K562 (cell line): ENCODE measurements at regions of chr12 and their contacts with region 1.

Region 1: GRCh38 chr12:113196996-113197395 is 11.5 kb downstream of the RITA1 start:
- DNase-seq: peak; percentile 73 to 87 (median 78)
- ATAC-seq: peak; percentile 97
- H3K4me3 ChIP-seq: no peak overlapping the region
- H3K27ac ChIP-seq: no peak overlapping the region
- H3K4me1 ChIP-seq: peaks cover 2 to 21% of the 10 kb centered on the region in 2 experiments; a peak in 4 of 5 replicates
- H3K27me3 ChIP-seq: no peaks in the 10 kb centered on the region
- CTCF ChIP-seq: peak; percentile 77 to 91 (median 78)
- EP300 ChIP-seq: no peak
- POLR2A ChIP-seq: no peak
- RAD21 ChIP-seq: peak; percentile 66 to 81

Region 2: GRCh38 chr12:112916270-112916669 is 280.7 kb before region 1 on chr12:
- CTCF ChIA-PET with region 1: no interaction called
- POLR2A ChIA-PET with region 1: no interaction called
- in situ Hi-C with region 1: no loop called
- intact Hi-C with region 1: no loop called
- DNase-seq: no peak
- ATAC-seq: no peak
- H3K4me3 ChIP-seq: no peak overlapping the region
- H3K27ac ChIP-seq: no peak overlapping the region
- H3K4me1 ChIP-seq: no peaks in the 10 kb centered on the region
- H3K27me3 ChIP-seq: no peaks in the 10 kb centered on the region
- CTCF ChIP-seq: no peak
- EP300 ChIP-seq: no peak
- POLR2A ChIP-seq: no peak
- RAD21 ChIP-seq: no peak

Region 3: GRCh38 chr12:113152835-113153814 is 43.9 kb before region 1 on chr12:
- CTCF ChIA-PET with region 1: no interaction called
- POLR2A ChIA-PET with region 1: no interaction called
- in situ Hi-C with region 1: no loop called
- intact Hi-C with region 1: no loop called
- DNase-seq: peak; percentile 75 to 84 (median 80)
- ATAC-seq: peak; percentile 95
- H3K4me3 ChIP-seq: peak overlapping the region; percentile 42
- H3K27ac ChIP-seq: no peak overlapping the region
- H3K4me1 ChIP-seq: peaks cover 5 to 29% of the 10 kb centered on the region in 2 experiments; a peak in 3 of 5 replicates
- H3K27me3 ChIP-seq: peaks cover 18 to 32% of the 10 kb centered on the region in 2 experiments
- CTCF ChIP-seq: peak; percentile 67 to 75 (median 73)
- EP300 ChIP-seq: no peak
- POLR2A ChIP-seq: no peak
- RAD21 ChIP-seq: peak; percentile 51 to 82

Region 4: GRCh38 chr12:113271853-113272561 is 75.0 kb after region 1 on chr12:
- CTCF ChIA-PET with region 1: no interaction called
- POLR2A ChIA-PET with region 1: no interaction called
- in situ Hi-C with region 1: no loop called
- intact Hi-C with region 1: no loop called
- DNase-seq: peak; percentile 50 to 74 (median 58)
- ATAC-seq: peak; percentile 94
- H3K4me3 ChIP-seq: no peak overlapping the region
- H3K27ac ChIP-seq: peak overlapping the region; percentile 34; the same call in 2 of the 3 replicates
- H3K4me1 ChIP-seq: peaks cover 13 to 16% of the 10 kb centered on the region in 2 experiments
- H3K27me3 ChIP-seq: no peaks in the 10 kb centered on the region
- CTCF ChIP-seq: no peak
- EP300 ChIP-seq: no peak
- POLR2A ChIP-seq: no peak
- RAD21 ChIP-seq: no peak

Region 5: DNA sequence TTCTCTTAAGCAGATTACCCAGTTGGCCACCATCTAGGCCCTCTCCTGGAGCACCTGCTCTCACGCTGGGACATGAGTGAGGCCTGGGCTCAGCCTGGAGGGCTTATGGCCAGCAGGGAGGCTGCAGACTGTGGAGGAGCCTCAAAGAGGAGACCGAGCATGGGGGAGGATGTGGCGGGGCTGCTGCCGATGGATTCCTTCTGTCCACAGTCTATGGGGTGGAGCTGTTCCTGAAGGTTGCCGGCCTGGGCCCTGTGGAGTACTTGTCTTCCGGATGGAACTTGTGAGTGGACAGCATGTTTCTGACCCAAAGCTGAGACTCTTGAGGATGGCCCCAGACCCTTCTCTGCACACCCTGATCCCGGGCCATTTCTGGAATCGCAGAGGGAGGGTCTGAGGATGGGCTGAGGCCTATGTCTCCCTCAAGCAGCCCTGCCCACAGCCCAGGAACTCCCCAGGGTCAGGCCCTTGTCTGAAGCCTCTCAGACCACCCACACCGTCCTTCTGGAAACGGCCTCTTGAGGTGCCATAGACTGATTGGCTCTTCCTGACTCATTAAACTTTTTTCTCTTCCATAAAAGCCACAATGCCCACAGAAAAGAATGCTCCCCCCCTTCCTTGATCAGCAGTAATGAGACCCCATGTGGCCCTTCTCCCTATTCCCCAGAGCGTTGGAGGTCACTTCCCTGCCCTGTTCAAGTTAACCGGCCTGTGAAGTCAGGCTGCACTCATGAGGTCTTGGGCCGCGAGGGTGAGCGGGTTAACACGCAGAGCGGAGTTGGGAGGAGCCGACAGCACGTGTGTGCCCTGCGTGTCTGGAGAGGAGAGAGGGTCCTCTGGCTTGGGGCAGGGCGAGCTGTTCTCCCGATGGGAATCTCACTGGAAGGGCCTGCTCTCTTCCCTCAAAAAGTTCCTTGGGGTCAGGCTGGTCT is 88.9 kb after region 1 on chr12:
- CTCF ChIA-PET with region 1: no interaction called
- POLR2A ChIA-PET with region 1: no interaction called
- in situ Hi-C with region 1: loop called (anchors 5 kb)
- intact Hi-C with region 1: loop called (anchors 5 kb)
- DNase-seq: no peak
- ATAC-seq: no peak
- H3K4me3 ChIP-seq: no peak overlapping the region
- H3K27ac ChIP-seq: no peak overlapping the region
- H3K4me1 ChIP-seq: peaks cover 0 to 16% of the 10 kb centered on the region in 2 experiments; a peak in 1 of 5 replicates
- H3K27me3 ChIP-seq: no peaks in the 10 kb centered on the region
- CTCF ChIP-seq: no peak
- EP300 ChIP-seq: no peak
- POLR2A ChIP-seq: no peak
- RAD21 ChIP-seq: no peak